CD14-positive monocyte (primary cell): ENCODE measurements at regions of chr2 and their contacts with region 1.

Region 1: DNA sequence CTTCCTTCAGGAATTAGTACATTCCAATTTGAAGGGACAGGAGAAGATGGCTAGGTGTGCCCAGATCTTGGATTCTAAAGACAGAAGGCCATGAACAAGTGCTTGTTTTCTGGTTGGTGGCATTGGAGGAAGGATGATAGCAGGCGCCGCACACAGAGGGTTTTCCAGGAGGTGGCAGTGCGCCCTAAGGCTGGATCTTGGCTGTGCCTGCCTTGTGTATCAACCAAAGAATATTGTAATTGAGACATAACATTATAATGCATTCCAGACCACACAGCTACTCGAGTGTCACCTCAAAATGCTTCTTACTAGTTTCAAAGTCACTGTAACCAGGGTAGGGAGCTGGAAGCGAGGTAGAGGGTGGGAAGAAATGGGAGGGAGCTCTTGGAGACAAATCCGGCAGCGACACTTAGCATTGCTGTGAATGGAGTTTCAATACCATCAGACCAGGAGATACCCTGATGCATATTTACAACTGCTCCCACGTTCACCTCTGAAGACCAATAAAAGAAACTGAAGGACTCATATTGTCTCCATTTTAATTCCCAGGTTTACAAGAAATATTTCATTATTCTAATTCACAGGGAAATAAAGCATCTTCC is 42.5 kb downstream of the CPO start:
- DNase-seq: peak in 2 of 3 donors; percentile 12 to 17
- H3K4me3 ChIP-seq: no peak overlapping the region
- H3K4me3 Mint-ChIP-seq: no peak overlapping the region
- H3K27ac ChIP-seq: no peak overlapping the region
- H3K27ac Mint-ChIP-seq: no peak overlapping the region
- H3K4me1 ChIP-seq: peaks cover 30 to 34% of the 10 kb centered on the region in 2 donors
- H3K4me1 Mint-ChIP-seq: peaks cover 34% of the 10 kb centered on the region
- H3K27me3 ChIP-seq: no peaks in the 10 kb centered on the region
- H3K27me3 Mint-ChIP-seq: peaks cover 0 to 2% (median 1%) of the 10 kb centered on the region in 3 donors
- CTCF ChIP-seq: peak; percentile 27

Region 2: GRCh38 chr2:206800506-206801417 is 181.1 kb before region 1 on chr2:
- intact Hi-C with region 1: loop called in 1 of 2 experiments (anchors 10 kb)
- DNase-seq: peak; percentile 28 to 67 (median 62)
- H3K4me3 ChIP-seq: peak overlapping the region; percentile 8 to 65 (median 51)
- H3K4me3 Mint-ChIP-seq: peak overlapping the region; percentile 75 to 92
- H3K27ac ChIP-seq: peak overlapping the region in 1 of 2 donors; percentile 50
- H3K27ac Mint-ChIP-seq: peak overlapping the region in 6 of 7 donors; percentile 38 to 88 (median 77)
- H3K4me1 ChIP-seq: peaks cover 39 to 42% of the 10 kb centered on the region in 2 donors
- H3K4me1 Mint-ChIP-seq: peaks cover 47% of the 10 kb centered on the region
- H3K27me3 ChIP-seq: no peaks in the 10 kb centered on the region
- H3K27me3 Mint-ChIP-seq: no peaks in the 10 kb centered on the region
- CTCF ChIP-seq: peak; percentile 78

Region 3: GRCh38 chr2:207032490-207032889 is 50.6 kb after region 1 on chr2:
- intact Hi-C with region 1: no loop called
- DNase-seq: no peak
- H3K4me3 ChIP-seq: no peak overlapping the region
- H3K4me3 Mint-ChIP-seq: no peak overlapping the region
- H3K27ac ChIP-seq: no peak overlapping the region
- H3K27ac Mint-ChIP-seq: no peak overlapping the region
- H3K4me1 ChIP-seq: no peaks in the 10 kb centered on the region
- H3K4me1 Mint-ChIP-seq: peaks cover 1% of the 10 kb centered on the region
- H3K27me3 ChIP-seq: no peaks in the 10 kb centered on the region
- H3K27me3 Mint-ChIP-seq: peaks cover 0 to 3% (median 3%) of the 10 kb centered on the region in 3 donors
- CTCF ChIP-seq: no peak